Psoas muscle (tissue), 8 donors: ENCODE measurements at regions of chr6 and their contacts with region 1.

Region 1: GRCh38 chr6:106085984-106086813 is at the start of gene PRDM1:
- DNase-seq: peak; percentile 71 to 86
- ATAC-seq: peak; percentile 79 to 83 (median 82)
- H3K4me3 ChIP-seq: peak within 1 kb of the TSS; percentile 59
- H3K27ac ChIP-seq: peak within 1 kb of the TSS; percentile 33
- H3K4me1 ChIP-seq: peaks cover 4% of the 10 kb centered on the region
- H3K27me3 ChIP-seq: peaks cover 0 to 4% (median 0%) of the 10 kb centered on the region in 3 donors
- CTCF ChIP-seq: peak; percentile 32
- total RNA-seq, gene PRDM1: 1.3 to 2.0 (median 1.7) TPM

Region 2: GRCh38 chr6:105484238-105485161 is 601.7 kb before region 1 on chr6:
- intact Hi-C with region 1: loop called in 1 of 2 experiments (anchors 5 kb)
- DNase-seq: no peak
- ATAC-seq: peak in 2 of 4 donors; percentile 23 to 70
- H3K4me3 ChIP-seq: peak overlapping the region; percentile 5
- H3K27ac ChIP-seq: no peak overlapping the region
- H3K4me1 ChIP-seq: no peaks in the 10 kb centered on the region
- H3K27me3 ChIP-seq: no peaks in the 10 kb centered on the region
- CTCF ChIP-seq: peak; percentile 84

Region 3: DNA sequence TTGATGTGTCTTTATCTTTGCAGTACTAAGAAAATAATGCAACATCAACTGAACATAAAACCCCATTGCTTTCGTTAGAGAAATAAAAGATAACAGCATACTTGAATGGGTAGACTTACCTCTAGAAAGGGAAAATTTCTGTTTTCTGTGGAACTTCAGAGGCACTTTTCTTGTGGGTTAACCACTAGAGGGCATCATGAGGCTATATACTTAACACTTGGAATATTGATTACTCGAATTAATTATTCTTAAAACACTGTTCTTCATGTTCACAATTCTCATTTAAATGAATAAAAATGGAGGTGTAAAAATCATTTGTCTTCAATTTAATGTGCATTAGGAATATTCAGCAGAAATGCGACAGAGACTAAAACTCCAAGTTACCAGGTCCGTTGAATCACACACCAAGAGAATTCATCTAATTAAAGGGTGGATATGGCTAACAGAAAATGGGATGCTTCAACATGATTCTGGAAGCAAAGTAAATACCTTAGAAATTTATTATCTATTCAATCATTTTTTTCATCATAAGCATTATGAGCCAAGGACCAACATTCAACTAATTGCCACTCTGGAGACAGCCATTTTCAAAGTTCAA is 352.5 kb before region 1 on chr6:
- intact Hi-C with region 1: loop called in 1 of 2 experiments (anchors 10 kb)
- DNase-seq: no peak
- ATAC-seq: no peak
- H3K4me3 ChIP-seq: no peak overlapping the region
- H3K27ac ChIP-seq: no peak overlapping the region
- H3K4me1 ChIP-seq: no peaks in the 10 kb centered on the region
- H3K27me3 ChIP-seq: no peaks in the 10 kb centered on the region
- CTCF ChIP-seq: peak; percentile 63

Region 4: GRCh38 chr6:105793130-105793529 is 293.1 kb before region 1 on chr6:
- intact Hi-C with region 1: loop called in 1 of 2 experiments (anchors 5 kb)
- DNase-seq: no peak
- ATAC-seq: no peak
- H3K4me3 ChIP-seq: no peak overlapping the region
- H3K27ac ChIP-seq: peak overlapping the region; percentile 78
- H3K4me1 ChIP-seq: peaks cover 40% of the 10 kb centered on the region
- H3K27me3 ChIP-seq: no peaks in the 10 kb centered on the region
- CTCF ChIP-seq: peak; percentile 15

Region 5: GRCh38 chr6:105952772-105953690 is 133.2 kb before region 1 on chr6:
- intact Hi-C with region 1: no loop called
- DNase-seq: no peak
- ATAC-seq: no peak
- H3K4me3 ChIP-seq: no peak overlapping the region
- H3K27ac ChIP-seq: no peak overlapping the region
- H3K4me1 ChIP-seq: no peaks in the 10 kb centered on the region
- H3K27me3 ChIP-seq: no peaks in the 10 kb centered on the region
- CTCF ChIP-seq: no peak

Region 6: DNA sequence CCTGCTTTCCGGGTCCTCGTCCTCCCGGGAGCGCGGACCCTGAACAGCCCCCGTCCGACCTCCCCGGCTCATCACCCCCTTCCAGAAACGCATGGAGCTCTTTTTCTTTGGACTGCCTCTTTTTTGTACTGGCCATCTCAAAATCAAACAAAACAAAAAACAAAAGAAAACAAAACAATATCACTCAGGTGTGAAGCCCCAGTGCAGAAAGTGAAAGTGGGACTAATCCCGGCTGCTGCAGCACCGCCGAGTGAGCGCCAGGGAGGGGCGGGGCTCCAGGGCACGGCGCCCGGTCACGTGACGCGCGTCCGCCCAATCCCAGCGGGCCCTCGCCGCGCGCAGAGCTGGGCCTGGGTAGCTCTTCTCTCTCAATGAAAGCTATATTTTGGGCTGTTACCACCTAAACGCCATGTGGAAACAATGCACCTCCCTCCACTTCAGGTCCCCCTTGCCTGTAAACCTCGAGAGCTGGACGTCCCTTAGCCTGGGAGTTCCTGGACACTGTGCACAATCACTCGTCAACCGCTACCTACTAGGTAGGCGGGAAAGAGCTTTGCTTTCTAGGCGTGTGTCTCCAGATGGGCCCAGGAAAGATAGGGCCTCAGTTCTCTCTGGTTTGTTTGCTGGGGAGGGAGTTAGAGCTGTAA is 93.8 kb before region 1 on chr6:
- intact Hi-C with region 1: loop called in 1 of 2 experiments (anchors 5 kb)
- DNase-seq: peak; percentile 78 to 89
- ATAC-seq: peak; percentile 88 to 95 (median 93)
- H3K4me3 ChIP-seq: peak overlapping the region; percentile 75
- H3K27ac ChIP-seq: no peak overlapping the region
- H3K4me1 ChIP-seq: peaks cover 18% of the 10 kb centered on the region
- H3K27me3 ChIP-seq: peaks cover 0 to 80% (median 13%) of the 10 kb centered on the region in 3 donors
- CTCF ChIP-seq: no peak

Region 7: GRCh38 chr6:106223300-106223930 is 137.2 kb after region 1 on chr6:
- intact Hi-C with region 1: loop called in 1 of 2 experiments (anchors 10 kb)
- DNase-seq: peak in 1 of 2 donors; percentile 21
- ATAC-seq: peak in 3 of 4 donors; percentile 54 to 81 (median 73)
- H3K4me3 ChIP-seq: no peak overlapping the region
- H3K27ac ChIP-seq: no peak overlapping the region
- H3K4me1 ChIP-seq: peaks cover 7% of the 10 kb centered on the region
- H3K27me3 ChIP-seq: no peaks in the 10 kb centered on the region
- CTCF ChIP-seq: peak; percentile 71

Region 8: DNA sequence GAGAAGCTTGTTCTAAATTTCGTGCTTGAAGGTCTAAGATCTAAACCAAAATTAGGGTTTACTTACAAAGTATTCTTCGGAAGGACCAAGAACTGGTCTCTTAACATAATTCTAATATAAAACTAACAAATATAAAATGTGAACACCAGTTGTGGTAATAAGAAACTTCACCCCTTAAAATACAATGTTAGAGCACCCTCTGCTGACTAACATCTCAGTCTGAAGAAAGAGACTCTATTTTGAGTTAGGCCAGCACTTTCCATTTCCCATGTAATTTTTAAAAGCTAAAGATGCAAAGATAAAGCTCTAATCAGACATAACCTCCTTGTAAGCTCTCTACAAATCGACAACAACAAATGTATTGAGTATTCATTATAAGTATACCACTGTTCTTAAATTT is 214.7 kb after region 1 on chr6:
- intact Hi-C with region 1: loop called in 1 of 2 experiments (anchors 10 kb)
- DNase-seq: no peak
- ATAC-seq: peak in 2 of 4 donors; percentile 58 to 73
- H3K4me3 ChIP-seq: no peak overlapping the region
- H3K27ac ChIP-seq: no peak overlapping the region
- H3K4me1 ChIP-seq: no peaks in the 10 kb centered on the region
- H3K27me3 ChIP-seq: no peaks in the 10 kb centered on the region
- CTCF ChIP-seq: peak; percentile 56